ENCODE measurements at regions of chr14 and their contacts with region 1.

Region 1: GRCh38 chr14:24310646-24311604 is at the start of gene LTB4R:
- DNase-seq: peak; percentile 77
- H3K4me3 Mint-ChIP-seq: peak within 1 kb of the TSS; percentile 81
- H3K27ac Mint-ChIP-seq: peak within 1 kb of the TSS; percentile 88
- H3K4me1 Mint-ChIP-seq: peaks cover 76% of the 10 kb centered on the region
- H3K27me3 Mint-ChIP-seq: no peaks in the 10 kb centered on the region

Region 2: DNA sequence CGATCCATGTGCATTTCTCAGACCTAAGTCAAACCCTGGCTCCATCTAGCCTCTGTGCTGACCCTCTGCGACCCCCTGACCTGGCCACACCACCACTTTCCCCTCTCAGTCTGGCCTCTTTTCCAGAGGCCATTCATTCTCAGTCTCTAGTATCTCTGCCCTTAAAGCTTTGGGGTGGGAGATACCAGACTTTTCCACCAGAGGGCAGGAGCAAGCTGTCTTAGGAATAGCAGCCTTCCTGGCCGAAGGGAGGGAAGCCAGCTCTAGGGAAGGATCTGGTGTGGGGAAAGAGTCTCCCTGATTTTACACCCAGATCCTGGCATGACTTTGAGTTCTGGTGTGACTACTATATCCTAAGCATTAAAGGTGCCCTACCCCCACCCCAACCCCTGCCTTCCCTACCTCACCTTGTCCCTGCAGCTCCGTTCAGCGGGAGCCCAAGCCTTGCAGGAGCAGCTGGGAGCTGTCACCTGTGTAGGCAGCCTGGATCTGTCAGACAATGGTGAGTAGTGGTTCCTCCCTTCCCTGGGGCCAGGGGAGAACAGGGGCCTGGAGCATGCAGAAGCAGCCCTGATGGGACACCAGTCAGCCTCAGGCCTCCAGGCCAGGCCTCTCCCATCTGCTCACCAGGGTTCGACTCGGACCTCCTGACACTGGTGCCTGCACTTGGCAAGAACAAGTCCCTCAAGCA is 252.5 kb before region 1 on chr14:
- CTCF ChIA-PET with region 1: interaction called, 12 read pairs
- DNase-seq: peak; percentile 84
- H3K4me3 Mint-ChIP-seq: no peak overlapping the region
- H3K27ac Mint-ChIP-seq: peak overlapping the region; percentile 19
- H3K4me1 Mint-ChIP-seq: peaks cover 6% of the 10 kb centered on the region
- H3K27me3 Mint-ChIP-seq: peaks cover 44% of the 10 kb centered on the region

Region 3: GRCh38 chr14:24232121-24232644 is 78.7 kb before region 1 on chr14 and contains the start of gene NEDD8:
- CTCF ChIA-PET with region 1: interaction called, 14 read pairs
- DNase-seq: peak; percentile 94
- H3K4me3 Mint-ChIP-seq: peak within 1 kb of the TSS; percentile 87
- H3K27ac Mint-ChIP-seq: peak within 1 kb of the TSS; percentile 91
- H3K4me1 Mint-ChIP-seq: peaks cover 60% of the 10 kb centered on the region
- H3K27me3 Mint-ChIP-seq: no peaks in the 10 kb centered on the region

Region 4: DNA sequence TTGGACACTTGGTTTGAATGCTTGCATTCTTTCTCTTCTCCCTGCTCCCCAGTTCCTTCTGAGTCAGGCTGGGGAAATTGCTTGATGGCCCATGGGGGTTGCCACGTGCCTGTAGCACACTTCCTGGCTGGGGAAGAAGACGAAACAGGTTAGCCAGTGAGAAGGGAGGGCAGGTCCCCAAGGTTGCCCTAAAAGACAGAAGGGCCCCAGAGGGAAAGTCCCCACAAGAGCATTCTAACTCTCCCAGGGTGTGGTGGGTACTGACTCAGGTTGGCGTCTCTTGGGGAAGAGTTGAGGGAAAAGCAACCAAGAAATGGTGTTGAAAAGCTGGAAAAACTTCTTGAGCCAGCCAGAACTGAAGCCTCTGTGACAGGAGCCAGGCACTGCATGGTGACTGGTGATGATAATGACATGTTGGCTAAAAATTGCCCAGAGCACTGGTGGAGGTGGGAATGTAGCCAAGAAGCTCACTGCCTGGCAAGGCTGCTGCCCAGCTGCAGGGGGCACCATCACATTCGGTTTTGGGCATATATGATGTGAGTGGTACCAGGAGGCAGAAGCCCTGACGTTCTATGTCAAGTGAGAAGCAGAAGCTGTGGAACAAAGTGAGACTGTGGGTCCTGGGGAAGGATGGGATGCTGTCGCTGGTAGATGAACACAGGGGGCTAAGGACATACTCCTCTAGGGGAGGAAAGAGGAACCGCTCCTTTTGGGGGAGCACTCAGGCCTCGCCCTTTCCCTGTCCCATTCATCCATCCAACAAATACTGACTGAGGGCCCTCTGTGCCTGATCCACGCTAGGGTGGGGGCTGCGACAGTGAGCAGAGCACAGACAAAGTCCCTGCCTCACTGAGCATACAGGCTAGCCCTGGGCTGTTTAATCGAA is 31.4 kb before region 1 on chr14:
- CTCF ChIA-PET with region 1: interaction called, 11 read pairs
- DNase-seq: peak; percentile 55
- H3K4me3 Mint-ChIP-seq: no peak overlapping the region
- H3K27ac Mint-ChIP-seq: no peak overlapping the region
- H3K4me1 Mint-ChIP-seq: peaks cover 37% of the 10 kb centered on the region
- H3K27me3 Mint-ChIP-seq: peaks cover 13% of the 10 kb centered on the region

Region 5: GRCh38 chr14:24299255-24300195 is 11.4 kb before region 1 on chr14 and contains the starts of genes DHRS1 and NOP9:
- CTCF ChIA-PET with region 1: interaction called, 105 read pairs
- DNase-seq: peak; percentile 94
- H3K4me3 Mint-ChIP-seq: peak within 1 kb of the TSS; percentile 93
- H3K27ac Mint-ChIP-seq: peak within 1 kb of the TSS; percentile 93
- H3K4me1 Mint-ChIP-seq: peaks cover 58% of the 10 kb centered on the region
- H3K27me3 Mint-ChIP-seq: peaks cover 5% of the 10 kb centered on the region

Region 6: GRCh38 chr14:24431569-24432258 is 120.8 kb after region 1 on chr14:
- CTCF ChIA-PET with region 1: interaction called, 23 read pairs
- DNase-seq: peak; percentile 95
- H3K4me3 Mint-ChIP-seq: peak overlapping the region; percentile 92
- H3K27ac Mint-ChIP-seq: peak overlapping the region; percentile 96
- H3K4me1 Mint-ChIP-seq: peaks cover 65% of the 10 kb centered on the region
- H3K27me3 Mint-ChIP-seq: no peaks in the 10 kb centered on the region

Region 7: GRCh38 chr14:24900269-24901100 is 589.6 kb after region 1 on chr14:
- CTCF ChIA-PET with region 1: no interaction called
- DNase-seq: no peak
- H3K4me3 Mint-ChIP-seq: no peak overlapping the region
- H3K27ac Mint-ChIP-seq: no peak overlapping the region
- H3K4me1 Mint-ChIP-seq: no peaks in the 10 kb centered on the region
- H3K27me3 Mint-ChIP-seq: no peaks in the 10 kb centered on the region

Measured in activated naive CD4-positive, alpha-beta T cell treated with anti-CD3 and anti-CD28 coated beads, Interleukin-2, amount 10 ng/mL, durations not matched to agents 7 days and 5 days (primary cell).